ENCODE measurements at regions of chr15 and their contacts with region 1.

Region 1: GRCh38 chr15:43492673-43493601 is at the start of gene TP53BP1:
- DNase-seq: peak; percentile 96
- H3K4me3 ChIP-seq: peak within 1 kb of the TSS; percentile 62 to 84
- H3K27ac ChIP-seq: peak within 1 kb of the TSS; percentile 87
- H3K4me1 ChIP-seq: no peaks in the 10 kb centered on the region
- H3K27me3 ChIP-seq: no peaks in the 10 kb centered on the region
- CTCF ChIP-seq: no peak
- POLR2A ChIP-seq: peak; percentile 48
- total RNA-seq, gene TP53BP1: 36.3 to 73.6 TPM

Region 2: GRCh38 chr15:43465105-43465504 is 27.8 kb before region 1 on chr15:
- intact Hi-C with region 1: no loop called
- DNase-seq: no peak
- H3K4me3 ChIP-seq: no peak overlapping the region
- H3K27ac ChIP-seq: no peak overlapping the region
- H3K4me1 ChIP-seq: no peaks in the 10 kb centered on the region
- H3K27me3 ChIP-seq: no peaks in the 10 kb centered on the region
- CTCF ChIP-seq: no peak
- POLR2A ChIP-seq: no peak

Region 3: GRCh38 chr15:43510200-43511011 is 17.5 kb after region 1 on chr15:
- intact Hi-C with region 1: loop called (anchors 1 kb)
- DNase-seq: peak; percentile 97
- H3K4me3 ChIP-seq: peak overlapping the region; percentile 51 to 52
- H3K27ac ChIP-seq: peak overlapping the region; percentile 70 to 83
- H3K4me1 ChIP-seq: no peaks in the 10 kb centered on the region
- H3K27me3 ChIP-seq: no peaks in the 10 kb centered on the region
- CTCF ChIP-seq: peak in 2 of 4 experiments; percentile 43 to 44
- POLR2A ChIP-seq: peak; percentile 64

Measured in prostate gland (tissue), 2 donors.